Activated T-helper 2 cell treated with anti-CD3 and anti-CD28 coated beads, Interferon-gamma antibody, Interleukin-2, Interleukin-4, amounts not matched to agents 10 μg/mL and 5 μg/mL and 100 μg/mL, durations not matched to agents 14 hours and 24 hours and 36 hours (primary cell): ENCODE measurements at regions of chr13 and their contacts with region 1.

Region 1: GRCh38 chr13:48975856-48976575 is at the start of gene FNDC3A:
- DNase-seq: peak; percentile 87
- H3K4me3 Mint-ChIP-seq: peak within 1 kb of the TSS; percentile 96
- H3K27ac Mint-ChIP-seq: peak within 1 kb of the TSS; percentile 98
- H3K4me1 Mint-ChIP-seq: peaks cover 34% of the 10 kb centered on the region
- H3K27me3 Mint-ChIP-seq: no peaks in the 10 kb centered on the region
- total RNA-seq, gene FNDC3A: 21.0 and 21.7 TPM in 2 replicates

Region 2: DNA sequence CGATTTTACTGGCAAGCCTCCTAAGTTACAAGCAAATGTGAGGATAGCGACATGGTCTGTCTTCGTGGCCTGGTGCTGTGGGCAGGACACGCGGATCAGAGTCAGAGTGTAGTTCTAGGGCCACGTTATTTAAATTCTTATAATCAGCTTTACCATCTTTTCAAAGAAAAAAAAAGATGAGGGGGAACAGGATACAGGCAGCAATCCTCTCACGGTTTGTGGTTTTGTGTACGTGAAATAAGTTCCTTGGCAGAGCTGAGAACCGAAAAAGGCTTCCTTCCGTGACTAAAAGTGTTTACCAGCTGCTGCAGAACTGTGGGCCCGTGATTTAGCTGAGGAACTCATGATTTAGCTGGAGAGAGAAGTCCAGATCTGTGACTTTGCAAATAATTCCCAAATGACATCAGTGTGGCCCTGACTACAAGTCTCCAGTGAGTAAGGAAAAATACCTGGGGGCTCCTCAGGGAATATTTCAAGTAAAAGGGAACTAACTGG is 470.4 kb before region 1 on chr13:
- intact Hi-C with region 1: loop called (anchors 10 kb)
- DNase-seq: peak; percentile 64
- H3K4me3 Mint-ChIP-seq: peak overlapping the region; percentile 30
- H3K27ac Mint-ChIP-seq: peak overlapping the region; percentile 73
- H3K4me1 Mint-ChIP-seq: peaks cover 75% of the 10 kb centered on the region
- H3K27me3 Mint-ChIP-seq: peaks cover 4% of the 10 kb centered on the region

Region 3: GRCh38 chr13:48653472-48653939 is 322.5 kb before region 1 on chr13 and contains the start of gene CYSLTR2:
- intact Hi-C with region 1: loop called (anchors 10 kb)
- DNase-seq: peak; percentile 28
- H3K4me3 Mint-ChIP-seq: peak within 1 kb of the TSS; percentile 79
- H3K27ac Mint-ChIP-seq: peak within 1 kb of the TSS; percentile 84
- H3K4me1 Mint-ChIP-seq: peaks cover 41% of the 10 kb centered on the region
- H3K27me3 Mint-ChIP-seq: no peaks in the 10 kb centered on the region
- total RNA-seq, gene CYSLTR2: 3.2 and 3.7 TPM in 2 replicates

Region 4: GRCh38 chr13:48885027-48885395 is 91.0 kb before region 1 on chr13:
- intact Hi-C with region 1: loop called (anchors 2 kb)
- DNase-seq: no peak
- H3K4me3 Mint-ChIP-seq: no peak overlapping the region
- H3K27ac Mint-ChIP-seq: no peak overlapping the region
- H3K4me1 Mint-ChIP-seq: peaks cover 38% of the 10 kb centered on the region
- H3K27me3 Mint-ChIP-seq: no peaks in the 10 kb centered on the region

Region 5: DNA sequence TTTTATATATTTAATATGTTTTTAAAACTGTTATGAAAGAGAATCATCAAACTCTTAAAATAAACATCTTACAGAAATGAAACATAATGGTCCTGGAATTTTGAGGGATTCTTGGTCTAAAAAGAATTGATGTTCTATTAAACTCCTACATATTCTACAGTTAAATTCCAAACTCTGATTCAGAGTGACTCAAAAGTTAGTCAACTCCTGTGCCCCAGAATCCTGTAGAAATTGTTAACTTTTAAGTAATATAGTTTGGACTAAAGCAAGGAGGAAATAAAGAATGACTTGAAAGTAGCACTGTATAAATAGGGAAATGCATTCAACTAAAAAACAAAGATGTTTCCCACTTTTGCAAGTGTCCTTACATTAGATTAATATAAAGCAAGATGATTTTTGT is 47.4 kb after region 1 on chr13:
- intact Hi-C with region 1: no loop called
- DNase-seq: no peak
- H3K4me3 Mint-ChIP-seq: no peak overlapping the region
- H3K27ac Mint-ChIP-seq: no peak overlapping the region
- H3K4me1 Mint-ChIP-seq: peaks cover 3% of the 10 kb centered on the region
- H3K27me3 Mint-ChIP-seq: no peaks in the 10 kb centered on the region

Region 6: GRCh38 chr13:49062297-49062903 is 86.4 kb after region 1 on chr13:
- intact Hi-C with region 1: no loop called
- DNase-seq: no peak
- H3K4me3 Mint-ChIP-seq: no peak overlapping the region
- H3K27ac Mint-ChIP-seq: no peak overlapping the region
- H3K4me1 Mint-ChIP-seq: peaks cover 12% of the 10 kb centered on the region
- H3K27me3 Mint-ChIP-seq: no peaks in the 10 kb centered on the region

Region 7: DNA sequence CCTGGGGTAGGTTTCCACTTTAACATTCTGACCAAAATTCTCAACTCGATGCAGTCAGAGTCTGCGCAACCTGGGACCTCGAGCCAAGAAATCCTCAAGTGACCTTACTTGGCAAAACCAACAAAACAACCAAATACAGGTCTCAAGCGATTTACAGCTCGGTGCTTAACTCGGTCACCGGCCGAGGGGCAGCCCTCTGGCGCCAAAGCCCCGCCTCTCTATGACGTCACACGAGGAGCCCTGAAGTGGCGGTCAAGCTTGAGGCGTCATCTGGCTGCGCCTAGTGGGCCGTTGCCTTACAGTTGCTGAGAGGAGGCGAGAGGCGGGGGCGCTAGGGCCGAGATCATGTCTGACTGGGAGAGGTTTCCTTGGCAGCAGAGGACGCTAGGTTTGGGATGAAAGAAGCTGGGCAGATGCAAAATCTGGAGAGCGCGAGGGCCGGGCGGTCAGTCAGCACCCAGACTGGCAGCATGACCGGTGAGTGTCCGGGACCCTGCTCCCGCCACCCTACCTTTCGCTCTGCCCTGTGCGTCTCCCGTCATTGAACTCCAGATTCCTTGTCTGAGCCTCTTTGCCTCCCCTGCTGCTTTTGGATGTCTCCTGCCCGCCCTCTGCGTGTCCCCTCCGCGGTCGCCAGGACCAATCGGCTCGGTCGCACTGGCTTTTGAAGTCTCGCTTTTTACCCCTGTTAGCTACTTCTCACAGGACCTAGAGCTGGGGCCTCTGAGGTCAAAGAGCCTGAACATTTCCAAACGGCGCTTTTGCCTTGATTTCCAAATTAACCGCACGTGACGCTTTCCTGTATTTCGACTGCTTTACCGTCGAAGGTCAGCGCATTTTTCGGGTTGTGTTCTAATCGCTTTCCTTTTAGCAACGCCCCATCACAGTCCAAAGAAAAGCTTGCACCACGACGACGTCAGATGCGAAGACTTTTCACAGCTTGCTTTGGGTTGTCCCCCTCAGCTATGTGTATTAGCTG is 271.9 kb after region 1 on chr13 and contains the start of gene CDADC1:
- intact Hi-C with region 1: loop called (anchors 1 kb)
- DNase-seq: peak; percentile 88
- H3K4me3 Mint-ChIP-seq: peak within 1 kb of the TSS; percentile 93
- H3K27ac Mint-ChIP-seq: peak within 1 kb of the TSS; percentile 96
- H3K4me1 Mint-ChIP-seq: peaks cover 26% of the 10 kb centered on the region
- H3K27me3 Mint-ChIP-seq: peaks cover 11% of the 10 kb centered on the region
- total RNA-seq, gene CDADC1: 7.4 and 8.6 TPM in 2 replicates